ENCODE measurements at regions of chr3 and their contacts with region 1.

Region 1: DNA sequence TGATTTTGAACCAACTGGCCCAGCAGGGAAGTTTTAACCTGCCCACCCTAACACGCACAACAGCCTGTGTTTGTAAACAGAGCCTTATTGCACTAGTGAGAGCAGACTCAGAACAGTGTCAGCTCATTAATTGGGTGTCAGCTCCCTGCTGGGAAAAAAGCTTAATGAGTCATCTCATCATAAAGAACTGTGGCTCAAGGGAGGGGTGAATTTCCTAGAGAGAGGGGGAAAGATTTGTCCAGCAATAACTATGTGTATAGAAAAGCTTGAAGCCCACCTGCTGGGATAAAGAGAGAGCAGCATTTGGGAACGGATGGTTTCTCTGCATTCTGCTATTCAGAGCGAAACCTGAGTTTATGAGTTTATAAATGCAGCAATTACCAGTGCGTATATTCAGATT is 48.9 kb upstream of the GMNC start:
- DNase-seq: no peak
- ATAC-seq: 0 out of 2 replicates have a peak, but pooled peaks have one; percentile 14
- H3K4me3 ChIP-seq: no peak overlapping the region
- H3K27ac ChIP-seq: no peak overlapping the region
- H3K4me1 ChIP-seq: 0 out of 2 replicates have a peak, but pooled peaks cover 4% of the 10 kb centered on the region
- H3K27me3 ChIP-seq: no peaks in the 10 kb centered on the region
- CTCF ChIP-seq: no peak

Region 2: DNA sequence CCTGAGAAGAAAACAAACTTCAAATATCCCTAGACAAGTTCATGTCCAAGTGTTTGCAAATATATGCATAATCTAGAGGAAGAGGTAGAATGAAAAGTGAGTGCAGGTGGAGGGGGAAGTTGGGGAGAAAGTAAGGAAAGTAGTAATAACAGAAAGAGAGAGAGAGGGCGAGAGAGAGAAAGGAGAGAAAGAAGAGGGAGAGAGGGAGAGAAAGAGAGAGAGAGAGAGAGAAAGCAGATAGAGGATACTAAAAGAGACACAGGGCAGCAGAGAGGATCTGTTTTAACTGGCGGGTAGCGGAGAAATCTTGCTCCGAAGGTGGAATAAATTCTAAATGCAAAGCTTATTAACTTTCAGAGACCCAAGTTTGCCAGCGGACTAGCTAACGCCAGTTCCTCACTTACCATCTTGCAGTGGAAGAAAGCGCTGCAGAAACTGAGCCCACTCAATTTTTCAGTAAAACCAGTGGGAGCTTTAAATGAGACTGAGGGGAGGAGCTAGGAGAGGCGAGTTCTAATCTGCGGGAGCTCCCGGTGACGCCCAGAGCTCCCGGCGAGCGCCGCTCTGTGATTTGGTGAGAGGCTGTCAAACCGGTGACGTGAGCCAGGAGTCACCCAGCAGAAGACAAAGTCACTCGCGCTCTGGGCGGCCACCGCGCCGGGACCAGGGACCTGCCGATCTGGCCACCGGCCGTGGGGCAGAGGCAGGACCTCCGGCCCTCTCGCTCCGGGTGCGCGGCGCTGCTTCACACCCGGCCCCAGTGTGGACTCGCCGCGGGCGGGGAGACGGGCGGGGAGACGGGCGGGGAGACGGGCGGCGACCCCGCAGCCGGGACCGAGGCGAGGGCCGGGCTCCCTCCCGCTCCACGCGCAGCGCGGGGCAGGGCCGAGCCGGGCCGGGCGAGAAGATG is 48.9 kb before region 1 on chr3 and contains the start of gene GMNC:
- CTCF ChIA-PET with region 1: no interaction called
- POLR2A ChIA-PET with region 1: no interaction called
- intact Hi-C with region 1: no loop called
- DNase-seq: peak; percentile 85
- ATAC-seq: peak; percentile 98
- H3K4me3 ChIP-seq: peak within 1 kb of the TSS; percentile 89
- H3K27ac ChIP-seq: no peak within 1 kb of the TSS
- H3K4me1 ChIP-seq: no peaks in the 10 kb centered on the region
- H3K27me3 ChIP-seq: no peaks in the 10 kb centered on the region
- CTCF ChIP-seq: no peak
- total RNA-seq, gene GMNC: 0.06 TPM in 1 of 2 replicates, not detected in the other

Region 3: DNA sequence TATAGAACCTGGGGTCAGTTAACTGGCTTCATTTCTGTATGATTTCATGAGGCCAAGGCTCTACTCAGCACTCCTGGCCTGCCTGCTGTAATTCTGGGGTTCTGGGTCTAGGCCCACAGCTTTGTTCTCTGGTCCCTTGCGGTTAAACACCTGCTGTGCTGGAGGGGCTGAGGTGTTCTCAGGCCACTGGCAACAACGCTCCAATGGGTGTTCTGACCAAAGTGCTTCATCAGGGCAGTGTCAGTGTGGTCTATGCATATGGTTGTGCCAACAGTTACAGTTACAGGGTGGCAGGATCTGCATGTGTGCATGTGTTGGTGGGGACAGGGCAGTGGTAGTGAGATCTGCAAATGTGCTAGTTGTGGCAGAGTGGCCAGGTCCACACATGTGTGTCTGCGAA is 15.2 kb after region 1 on chr3:
- CTCF ChIA-PET with region 1: interaction called, 10 read pairs
- POLR2A ChIA-PET with region 1: no interaction called
- intact Hi-C with region 1: no loop called
- DNase-seq: no peak
- ATAC-seq: no peak
- H3K4me3 ChIP-seq: no peak overlapping the region
- H3K27ac ChIP-seq: no peak overlapping the region
- H3K4me1 ChIP-seq: no peaks in the 10 kb centered on the region
- H3K27me3 ChIP-seq: 0 out of 2 replicates have a peak, but pooled peaks cover 2% of the 10 kb centered on the region
- CTCF ChIP-seq: no peak

Region 4: GRCh38 chr3:191051037-191051436 is 139.7 kb after region 1 on chr3:
- CTCF ChIA-PET with region 1: no interaction called
- POLR2A ChIA-PET with region 1: no interaction called
- intact Hi-C with region 1: no loop called
- DNase-seq: peak; percentile 78
- ATAC-seq: peak; percentile 78
- H3K4me3 ChIP-seq: no peak overlapping the region
- H3K27ac ChIP-seq: no peak overlapping the region
- H3K4me1 ChIP-seq: no peaks in the 10 kb centered on the region
- H3K27me3 ChIP-seq: no peaks in the 10 kb centered on the region
- CTCF ChIP-seq: peak; percentile 71

Measured in PC-3 (cell line).